Naive thymus-derived CD4-positive, alpha-beta T cell (primary cell): ENCODE measurements at regions of chr5 and their contacts with region 1.

Region 1: GRCh38 chr5:56814963-56815658 is at the start of gene MAP3K1:
- DNase-seq: peak; percentile 75 to 92 (median 86)
- ATAC-seq: peak; percentile 83
- H3K4me3 ChIP-seq: peak within 1 kb of the TSS; percentile 95
- H3K4me3 Mint-ChIP-seq: peak within 1 kb of the TSS; percentile 93 to 97 (median 95)
- H3K27ac ChIP-seq: peak within 1 kb of the TSS; percentile 83
- H3K27ac Mint-ChIP-seq: peak within 1 kb of the TSS; percentile 91 to 97 (median 93)
- H3K4me1 ChIP-seq: peaks cover 8 to 17% of the 10 kb centered on the region in 2 donors
- H3K4me1 Mint-ChIP-seq: peaks cover 23 to 47% (median 41%) of the 10 kb centered on the region in 7 donors
- H3K27me3 ChIP-seq: no peaks in the 10 kb centered on the region
- H3K27me3 Mint-ChIP-seq: peaks cover 0 to 6% (median 0%) of the 10 kb centered on the region in 5 donors
- total RNA-seq, gene MAP3K1: 54.4 to 85.4 (median 77.3) TPM

Region 2: DNA sequence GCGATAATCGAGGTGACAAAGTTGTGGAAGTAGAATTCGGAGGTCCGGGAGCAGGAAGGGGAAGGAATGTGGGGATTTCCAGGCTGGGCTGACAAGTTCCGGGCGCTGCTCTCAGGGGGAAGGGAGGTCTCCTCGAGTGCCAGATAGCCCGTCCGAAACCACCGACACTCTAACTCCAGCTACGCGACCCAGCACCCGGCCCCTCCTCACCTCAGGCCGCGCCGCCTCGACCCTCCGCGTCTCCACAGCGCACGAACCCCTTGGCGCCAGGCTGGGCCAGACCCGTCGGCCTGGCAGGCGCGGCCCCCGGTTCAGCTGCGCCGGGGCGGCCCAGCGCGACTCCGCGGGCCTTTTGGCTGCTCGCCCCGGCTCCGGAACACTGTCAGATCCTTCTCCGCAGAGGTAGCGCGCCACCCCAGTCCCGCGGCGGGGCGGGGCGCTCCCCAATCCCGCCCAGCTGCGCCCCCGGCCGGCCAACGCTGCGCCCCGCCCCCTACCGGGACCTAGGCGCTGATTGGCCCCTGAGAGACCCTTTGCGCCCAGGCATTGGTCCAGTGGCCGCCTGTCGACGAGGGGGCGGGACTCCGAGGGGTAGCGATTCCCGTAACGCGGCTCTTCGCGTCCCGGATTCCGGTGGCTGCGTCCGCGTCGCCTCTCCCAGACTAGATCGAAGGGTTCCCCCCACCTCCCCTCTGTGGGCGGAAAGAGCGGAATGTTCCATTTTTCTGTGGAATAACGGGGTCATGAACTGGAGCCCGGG is 820.4 kb before region 1 on chr5 and contains the start of gene IL6ST:
- CTCF ChIA-PET with region 1: no interaction called
- POLR2A ChIA-PET with region 1: no interaction called
- intact Hi-C with region 1: loop called (anchors 2 to 5 kb)
- DNase-seq: peak; percentile 93 to 99 (median 95)
- ATAC-seq: peak; percentile 96
- H3K4me3 ChIP-seq: peak within 1 kb of the TSS; percentile 94
- H3K4me3 Mint-ChIP-seq: peak within 1 kb of the TSS; percentile 88 to 99 (median 96)
- H3K27ac ChIP-seq: peak within 1 kb of the TSS; percentile 99
- H3K27ac Mint-ChIP-seq: peak within 1 kb of the TSS; percentile 95 to 100 (median 98)
- H3K4me1 ChIP-seq: peaks cover 10 to 12% of the 10 kb centered on the region in 2 donors
- H3K4me1 Mint-ChIP-seq: peaks cover 28 to 59% (median 50%) of the 10 kb centered on the region in 7 donors
- H3K27me3 ChIP-seq: no peaks in the 10 kb centered on the region
- H3K27me3 Mint-ChIP-seq: no peaks in the 10 kb centered on the region
- total RNA-seq, gene IL6ST: 101 to 372 (median 346) TPM

Region 3: DNA sequence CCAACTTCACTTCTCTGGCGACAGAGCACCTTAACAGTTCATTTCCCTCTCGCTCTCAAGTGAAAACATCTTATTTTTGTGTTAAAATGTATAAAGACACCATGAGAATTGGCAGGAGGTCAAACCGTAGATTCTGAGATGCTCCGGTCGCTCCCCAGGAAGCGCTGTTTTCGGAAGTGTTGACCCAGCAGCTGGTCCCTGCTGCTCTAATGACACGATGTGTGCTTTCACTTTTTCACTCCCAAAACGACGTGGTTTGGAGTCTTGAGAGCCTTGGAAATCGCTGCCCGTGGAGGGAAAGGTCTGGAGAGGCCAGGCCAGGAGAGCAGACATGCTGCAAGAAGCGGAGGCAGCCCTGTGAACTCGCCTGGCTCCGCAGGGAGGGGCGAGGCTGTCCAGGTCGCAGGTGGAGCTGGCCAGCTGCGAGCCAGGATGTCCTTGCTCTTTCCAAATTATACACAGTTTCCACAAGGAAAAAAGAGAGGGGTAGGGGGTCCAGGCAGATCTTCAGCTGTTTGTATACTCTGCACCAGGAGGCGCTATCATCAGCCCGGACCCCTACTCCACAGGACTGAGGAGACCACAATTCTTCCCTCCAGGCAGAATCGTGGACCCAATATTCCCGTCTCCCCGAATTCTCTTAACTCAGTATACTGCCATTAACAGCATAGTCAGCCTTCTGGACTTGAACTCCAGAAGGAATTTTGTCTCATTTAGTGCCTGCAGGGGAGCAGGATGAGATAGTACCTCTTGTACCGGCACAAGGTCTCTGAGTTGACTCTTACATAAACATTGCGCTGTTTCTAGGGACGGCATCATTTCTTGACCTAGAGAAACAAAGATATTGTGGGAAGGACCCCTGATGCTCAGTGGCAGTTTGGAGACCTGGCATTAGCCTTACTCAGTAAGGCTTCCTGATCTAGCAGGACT is 333.4 kb before region 1 on chr5:
- CTCF ChIA-PET with region 1: no interaction called
- POLR2A ChIA-PET with region 1: interaction called, 18 read pairs
- intact Hi-C with region 1: loop called (anchors 1 kb)
- DNase-seq: peak in 6 of 9 donors; percentile 19 to 44 (median 33)
- ATAC-seq: peak; percentile 12
- H3K4me3 ChIP-seq: peak overlapping the region; percentile 60
- H3K4me3 Mint-ChIP-seq: peak overlapping the region; percentile 80 to 95 (median 90)
- H3K27ac ChIP-seq: peak overlapping the region; percentile 80
- H3K27ac Mint-ChIP-seq: peak overlapping the region; percentile 86 to 95 (median 90)
- H3K4me1 ChIP-seq: peaks cover 0 to 37% of the 10 kb centered on the region in 2 donors
- H3K4me1 Mint-ChIP-seq: peaks cover 19 to 53% (median 45%) of the 10 kb centered on the region in 7 donors
- H3K27me3 ChIP-seq: no peaks in the 10 kb centered on the region
- H3K27me3 Mint-ChIP-seq: no peaks in the 10 kb centered on the region

Region 4: GRCh38 chr5:56686337-56687195 is 128.5 kb before region 1 on chr5:
- CTCF ChIA-PET with region 1: no interaction called
- POLR2A ChIA-PET with region 1: interaction called, 25 read pairs
- intact Hi-C with region 1: loop called in 1 of 2 experiments (anchors 2 kb)
- DNase-seq: peak in 5 of 9 donors; percentile 28 to 56 (median 42)
- ATAC-seq: peak; percentile 60
- H3K4me3 ChIP-seq: no peak overlapping the region
- H3K4me3 Mint-ChIP-seq: peak overlapping the region in 9 of 10 donors; percentile 6 to 66 (median 40)
- H3K27ac ChIP-seq: peak overlapping the region; percentile 30
- H3K27ac Mint-ChIP-seq: peak overlapping the region; percentile 22 to 98 (median 79)
- H3K4me1 ChIP-seq: peaks cover 19 to 75% of the 10 kb centered on the region in 2 donors
- H3K4me1 Mint-ChIP-seq: peaks cover 49 to 88% (median 85%) of the 10 kb centered on the region in 7 donors
- H3K27me3 ChIP-seq: no peaks in the 10 kb centered on the region
- H3K27me3 Mint-ChIP-seq: no peaks in the 10 kb centered on the region

Region 5: DNA sequence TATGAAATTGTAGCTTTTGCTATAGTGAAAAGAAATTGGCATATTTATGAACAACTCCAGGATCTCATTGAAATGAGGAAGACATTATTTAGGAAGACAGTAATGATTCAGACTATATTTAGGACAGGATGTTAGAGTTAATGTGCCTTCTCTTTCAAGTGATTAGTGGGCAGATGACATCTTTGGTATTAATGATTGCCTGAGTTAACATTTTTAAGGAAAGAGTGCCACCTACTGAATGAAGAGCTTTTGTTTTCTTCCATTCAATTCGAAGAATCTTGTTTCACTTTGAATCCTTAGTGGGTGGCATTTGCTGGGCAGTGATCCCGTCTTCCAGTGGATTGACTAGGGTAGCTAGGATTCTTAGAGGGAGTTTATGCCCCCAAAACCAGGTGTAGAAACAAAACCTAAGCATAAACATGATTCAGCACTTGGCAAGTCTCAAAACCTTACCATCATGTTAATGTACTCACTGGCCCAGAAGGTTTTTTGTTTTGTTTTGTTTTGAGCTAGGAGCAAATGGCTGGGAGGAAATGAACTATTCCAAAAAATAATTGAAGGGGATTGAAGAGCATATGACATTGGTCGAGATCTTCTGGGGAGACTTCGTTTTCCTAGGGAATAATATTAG is 23.4 kb after region 1 on chr5:
- CTCF ChIA-PET with region 1: interaction called, 3 read pairs
- POLR2A ChIA-PET with region 1: interaction called, 6 read pairs
- intact Hi-C with region 1: loop called in 1 of 2 experiments (anchors 1 kb)
- DNase-seq: peak in 7 of 9 donors; percentile 33 to 61 (median 48)
- ATAC-seq: peak; percentile 75
- H3K4me3 ChIP-seq: no peak overlapping the region
- H3K4me3 Mint-ChIP-seq: peak overlapping the region; percentile 19 to 79 (median 57)
- H3K27ac ChIP-seq: peak overlapping the region; percentile 42
- H3K27ac Mint-ChIP-seq: peak overlapping the region; percentile 8 to 95 (median 78)
- H3K4me1 ChIP-seq: peaks cover 8 to 87% of the 10 kb centered on the region in 2 donors
- H3K4me1 Mint-ChIP-seq: peaks cover 63 to 95% (median 90%) of the 10 kb centered on the region in 7 donors
- H3K27me3 ChIP-seq: no peaks in the 10 kb centered on the region
- H3K27me3 Mint-ChIP-seq: no peaks in the 10 kb centered on the region

Region 6: DNA sequence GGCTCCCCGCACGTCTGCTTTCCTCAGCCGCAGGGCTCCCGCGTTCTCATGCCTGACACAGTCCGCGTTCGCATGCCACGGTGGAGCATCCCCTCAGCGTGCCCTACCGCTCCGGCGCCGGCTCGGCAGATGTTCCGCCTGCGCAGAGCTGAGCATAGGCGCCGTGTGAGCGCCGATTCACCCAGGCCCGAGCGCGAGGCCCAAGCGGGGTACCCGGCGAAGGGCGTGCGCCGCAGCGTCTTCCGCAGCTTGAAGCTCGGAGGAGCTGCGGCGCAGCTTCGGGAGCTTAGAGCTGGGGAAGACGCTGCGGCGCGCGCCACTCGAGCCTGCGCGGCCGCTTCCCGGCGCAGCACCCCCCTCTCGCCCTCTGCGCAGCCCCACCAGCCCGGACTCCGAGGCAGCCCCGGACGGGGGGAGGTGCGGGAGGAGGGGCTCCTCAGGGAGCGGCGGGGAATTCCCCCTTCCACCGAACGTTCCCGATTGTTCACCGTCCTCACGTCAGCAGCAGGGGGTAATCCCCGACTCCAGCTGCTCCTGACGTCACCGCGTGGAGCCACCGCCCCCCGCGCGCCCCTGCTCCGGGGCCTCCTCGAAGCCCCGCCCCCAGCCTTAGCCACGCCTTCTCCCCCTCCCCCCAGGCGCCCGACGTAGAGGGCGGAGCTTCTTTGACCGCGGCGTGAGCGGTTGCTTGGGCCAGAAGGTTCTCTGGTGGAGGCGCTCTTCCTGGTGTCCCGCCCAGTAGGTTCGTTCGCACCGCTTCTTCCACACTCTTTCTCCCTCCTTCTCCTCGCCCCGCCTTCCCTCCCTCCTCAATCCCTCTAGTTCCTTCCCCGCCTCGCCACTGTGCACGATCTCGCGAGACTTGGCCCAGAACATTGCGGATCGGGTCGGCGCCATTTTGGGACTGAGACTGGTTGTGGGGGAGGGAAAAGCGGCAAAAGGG is 358.3 kb after region 1 on chr5 and contains the start of gene GPBP1:
- CTCF ChIA-PET with region 1: no interaction called
- POLR2A ChIA-PET with region 1: interaction called, 3 read pairs
- intact Hi-C with region 1: loop called (anchors 1 kb)
- DNase-seq: peak; percentile 94 to 99 (median 98)
- ATAC-seq: peak; percentile 88
- H3K4me3 ChIP-seq: peak within 1 kb of the TSS; percentile 95
- H3K4me3 Mint-ChIP-seq: peak within 1 kb of the TSS; percentile 89 to 100 (median 97)
- H3K27ac ChIP-seq: peak within 1 kb of the TSS; percentile 99
- H3K27ac Mint-ChIP-seq: peak within 1 kb of the TSS; percentile 92 to 100 (median 98)
- H3K4me1 ChIP-seq: peaks cover 4 to 8% of the 10 kb centered on the region in 2 donors
- H3K4me1 Mint-ChIP-seq: peaks cover 23 to 38% (median 29%) of the 10 kb centered on the region in 7 donors
- H3K27me3 ChIP-seq: no peaks in the 10 kb centered on the region
- H3K27me3 Mint-ChIP-seq: no peaks in the 10 kb centered on the region
- total RNA-seq, gene GPBP1: 99.2 to 149 (median 116) TPM